A549 (cell line): ENCODE measurements at regions of chr10 and their contacts with region 1.

Region 1: DNA sequence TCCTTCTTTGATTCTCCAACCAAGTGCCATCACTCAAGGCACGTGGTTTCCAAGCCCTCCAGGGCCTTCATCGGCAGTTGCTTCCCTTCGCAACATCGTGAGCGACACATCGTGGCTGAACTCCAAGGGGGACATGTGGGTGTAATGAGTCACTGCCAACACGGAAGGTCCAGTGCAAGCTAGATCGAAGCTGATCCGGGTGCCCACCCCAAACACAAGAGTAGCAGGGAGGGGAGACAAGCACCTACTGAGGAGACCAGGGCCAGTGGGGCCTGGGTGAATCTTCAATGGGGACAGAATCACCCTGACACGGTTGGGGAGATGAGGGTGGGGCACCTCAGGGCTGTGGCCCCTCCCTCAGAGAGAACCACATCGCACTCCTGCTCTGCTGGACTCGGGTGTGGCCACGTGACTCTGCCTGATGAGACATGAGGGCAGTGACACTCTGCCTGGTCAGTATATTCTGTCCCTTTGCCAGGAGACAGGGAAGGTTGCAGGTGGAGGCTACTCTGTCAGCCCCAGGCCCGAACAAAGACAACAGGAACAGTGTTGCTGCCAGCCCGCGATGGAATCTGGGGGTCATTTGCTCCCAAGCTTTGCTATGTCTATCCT is 36.8 kb upstream of the HSPA12A start:
- DNase-seq: no peak
- ATAC-seq: no peak
- H3K4me3 ChIP-seq: no peak overlapping the region
- H3K27ac ChIP-seq: peak overlapping the region in 1 of 2 experiments; percentile 31; a peak in 1 of 6 replicates
- H3K4me1 ChIP-seq: peaks cover 11% of the 10 kb centered on the region
- CTCF ChIP-seq: no peak
- EP300 ChIP-seq: no peak
- POLR2A ChIP-seq: no peak
- RAD21 ChIP-seq: no peak

Region 2: DNA sequence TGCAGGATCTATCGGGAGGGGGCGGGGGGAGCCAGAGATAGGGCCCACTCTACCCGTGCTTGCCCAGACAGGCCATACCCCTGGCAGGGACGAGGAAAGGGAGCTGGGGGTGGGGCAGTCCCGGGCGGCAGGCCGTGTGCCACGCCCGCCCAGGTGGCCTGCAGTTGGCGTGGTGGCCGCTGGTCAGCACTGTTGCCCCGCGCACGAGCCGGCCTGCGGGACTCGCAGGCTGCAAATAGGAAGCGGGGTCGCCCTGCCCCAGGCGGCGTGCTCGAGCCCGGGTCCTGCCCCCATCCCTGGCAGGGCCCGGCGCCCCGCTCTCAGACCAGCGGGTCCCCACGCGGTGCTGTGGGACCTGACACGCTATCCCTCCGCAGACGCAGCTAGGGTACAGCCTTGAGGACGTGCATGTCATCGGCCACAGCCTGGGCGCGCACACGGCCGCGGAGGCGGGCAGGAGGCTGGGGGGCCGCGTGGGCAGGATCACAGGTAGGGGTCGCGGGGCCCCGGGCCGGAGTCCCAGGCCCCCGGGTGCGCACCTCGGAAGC is 151.7 kb before region 1 on chr10:
- CTCF ChIA-PET with region 1: interaction called, 11 read pairs
- POLR2A ChIA-PET with region 1: no interaction called
- DNase-seq: peak; percentile 44 to 48
- ATAC-seq: peak; percentile 92 to 97
- H3K4me3 ChIP-seq: peak overlapping the region; percentile 56
- H3K27ac ChIP-seq: peak overlapping the region; percentile 58 to 74; a peak in 4 of 6 replicates
- H3K4me1 ChIP-seq: no peaks in the 10 kb centered on the region
- CTCF ChIP-seq: peak; percentile 52
- EP300 ChIP-seq: no peak
- POLR2A ChIP-seq: no peak
- RAD21 ChIP-seq: peak; percentile 47 to 67

Region 3: DNA sequence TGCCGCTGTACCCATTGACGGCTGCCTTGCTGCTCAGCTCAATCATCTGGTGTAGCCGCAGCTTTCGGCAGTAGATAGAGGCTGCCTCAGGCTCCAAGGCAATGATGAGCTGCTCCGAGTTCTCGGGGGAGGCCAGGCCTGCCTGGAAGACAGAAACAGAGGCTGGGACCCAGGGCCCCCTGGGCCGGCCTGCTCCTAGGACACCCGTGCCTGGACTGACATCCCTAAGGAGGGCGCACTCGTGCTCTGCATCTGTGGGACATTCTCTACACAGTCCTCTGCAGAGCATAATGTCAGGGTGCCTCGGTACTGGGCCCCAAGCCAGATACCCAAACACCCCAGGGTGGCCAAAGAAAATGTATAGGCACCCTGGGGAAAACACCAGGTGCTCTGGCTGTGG is 95.4 kb before region 1 on chr10:
- CTCF ChIA-PET with region 1: interaction called, 17 read pairs
- POLR2A ChIA-PET with region 1: no interaction called
- DNase-seq: no peak
- ATAC-seq: no peak; a peak in 1 of 6 replicates
- H3K4me3 ChIP-seq: no peak overlapping the region
- H3K27ac ChIP-seq: no peak overlapping the region
- H3K4me1 ChIP-seq: no peaks in the 10 kb centered on the region
- CTCF ChIP-seq: no peak
- EP300 ChIP-seq: no peak
- POLR2A ChIP-seq: no peak
- RAD21 ChIP-seq: no peak

Region 4: GRCh38 chr10:116748041-116748440 is 31.1 kb before region 1 on chr10:
- CTCF ChIA-PET with region 1: no interaction called
- POLR2A ChIA-PET with region 1: no interaction called
- DNase-seq: peak; percentile 44 to 55
- ATAC-seq: peak; percentile 32 to 56; a peak in 3 of 6 replicates
- H3K4me3 ChIP-seq: no peak overlapping the region
- H3K27ac ChIP-seq: peak overlapping the region; percentile 65 to 72
- H3K4me1 ChIP-seq: peaks cover 29% of the 10 kb centered on the region
- CTCF ChIP-seq: no peak
- EP300 ChIP-seq: no peak
- POLR2A ChIP-seq: no peak
- RAD21 ChIP-seq: no peak

Region 5: DNA sequence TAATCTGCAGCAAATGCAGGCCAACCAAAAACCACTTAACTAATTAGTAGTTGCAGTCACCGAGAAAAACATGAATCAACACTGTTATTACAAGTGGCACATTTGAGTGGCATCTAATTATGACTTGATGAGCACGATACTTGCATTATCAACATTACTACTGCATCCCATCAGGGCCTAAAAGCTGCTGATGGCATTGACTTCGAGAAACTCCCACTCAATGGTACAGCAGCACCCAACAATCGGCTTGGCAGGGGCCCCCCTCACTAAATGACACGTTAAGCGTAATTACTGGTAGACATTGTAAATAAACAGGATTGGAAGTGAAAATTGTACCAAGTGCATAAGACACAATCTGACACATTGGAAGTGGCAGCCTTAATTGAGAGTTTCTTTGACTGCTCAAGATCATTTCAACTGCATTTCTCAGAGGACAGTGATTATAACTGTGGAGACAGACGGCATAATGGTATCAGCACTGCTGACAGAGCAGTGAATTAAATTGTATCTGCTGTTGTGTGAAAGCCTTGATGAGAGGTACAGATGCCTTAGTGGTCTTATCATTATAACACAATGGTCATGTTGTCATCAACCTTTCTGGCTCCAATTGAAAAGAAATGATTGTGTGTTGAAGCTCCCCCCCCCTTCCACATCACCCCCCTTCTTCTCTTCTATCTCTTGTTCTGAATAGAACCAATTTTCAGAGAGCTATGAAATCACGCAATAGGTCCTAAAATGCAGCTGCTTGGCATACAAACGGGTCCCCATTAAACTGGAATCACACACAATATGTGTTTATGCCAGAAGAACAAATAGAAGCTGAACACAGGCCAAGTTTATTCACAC is 182.4 kb after region 1 on chr10:
- CTCF ChIA-PET with region 1: no interaction called
- POLR2A ChIA-PET with region 1: no interaction called
- DNase-seq: no peak
- ATAC-seq: no peak
- H3K4me3 ChIP-seq: no peak overlapping the region
- H3K27ac ChIP-seq: no peak overlapping the region
- H3K4me1 ChIP-seq: no peaks in the 10 kb centered on the region
- CTCF ChIP-seq: no peak
- EP300 ChIP-seq: no peak
- POLR2A ChIP-seq: no peak
- RAD21 ChIP-seq: no peak